GM12878 (cell line): ENCODE measurements at regions of chr11 and their contacts with region 1.

Region 1: DNA sequence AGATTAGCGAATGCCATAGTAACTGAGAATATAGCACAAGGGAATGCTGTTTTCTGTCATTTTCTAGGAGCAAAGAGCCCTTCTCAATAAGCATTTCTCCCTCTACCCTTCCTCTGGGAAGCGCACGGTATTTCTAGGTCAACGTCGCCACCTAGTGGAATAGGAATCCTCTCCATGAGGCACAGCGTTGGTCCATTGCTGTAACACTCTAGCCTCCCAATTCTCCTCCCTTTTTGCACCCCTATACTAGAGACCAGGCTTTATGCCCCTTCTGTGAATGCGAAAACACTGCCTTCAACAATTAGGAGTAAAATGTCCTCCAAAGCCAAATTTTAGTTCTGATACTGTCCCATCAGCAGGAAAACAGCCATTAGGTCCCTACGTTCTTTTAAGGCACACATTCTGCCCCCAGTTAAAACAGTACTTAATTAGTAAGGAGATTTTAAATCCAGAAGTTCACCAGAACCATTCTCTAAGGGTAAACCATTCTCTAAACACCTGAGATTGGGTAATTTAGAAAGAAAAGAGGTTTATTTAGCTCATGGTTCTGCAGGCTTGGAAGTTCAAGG is 12.8 kb upstream of the HYLS1 start:
- DNase-seq: no peak
- ATAC-seq: peak; percentile 97
- H3K4me3 ChIP-seq: no peak overlapping the region
- H3K27ac ChIP-seq: no peak overlapping the region
- H3K4me1 ChIP-seq: no peaks in the 10 kb centered on the region
- H3K27me3 ChIP-seq: no peaks in the 10 kb centered on the region
- CTCF ChIP-seq: peak; percentile 74 to 81 (median 77)
- EP300 ChIP-seq: no peak
- POLR2A ChIP-seq: no peak
- RAD21 ChIP-seq: peak; percentile 88

Region 2: DNA sequence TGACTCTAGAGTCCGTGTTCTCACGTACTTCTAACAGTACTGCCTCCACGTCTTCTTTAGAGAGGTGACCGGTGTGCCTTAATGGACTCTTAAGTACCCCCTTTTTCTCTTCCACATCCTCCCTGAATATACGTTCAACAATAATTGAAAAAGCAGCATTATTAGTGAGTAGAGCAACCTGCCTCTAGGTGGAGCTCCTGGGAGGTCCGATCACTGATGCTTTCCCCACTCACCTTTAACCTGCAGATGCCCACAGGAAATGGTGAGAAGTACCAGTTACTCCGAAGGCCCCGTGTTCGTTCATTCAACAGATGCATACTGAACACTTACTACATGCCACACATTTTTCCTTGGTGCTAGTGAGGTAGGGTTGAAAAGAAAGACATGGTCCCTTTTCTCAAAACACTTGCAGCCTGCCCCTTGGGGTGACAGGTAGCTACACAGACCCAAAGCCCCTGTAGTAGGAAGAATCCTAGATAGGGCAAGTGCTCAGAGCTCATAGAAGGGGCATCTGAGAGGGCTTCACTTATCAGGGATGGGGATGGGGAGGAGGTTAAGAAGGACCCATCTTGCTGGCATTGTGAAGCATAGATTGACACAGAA is 451.3 kb before region 1 on chr11:
- CTCF ChIA-PET with region 1: interaction called, 4 read pairs
- POLR2A ChIA-PET with region 1: no interaction called
- RAD21 ChIA-PET with region 1: no interaction called
- SMC1A ChIA-PET with region 1: no interaction called
- in situ Hi-C with region 1: loop called (anchors 10 kb)
- intact Hi-C with region 1: loop called (anchors 1 kb)
- DNase-seq: no peak
- ATAC-seq: peak; percentile 87
- H3K4me3 ChIP-seq: no peak overlapping the region
- H3K27ac ChIP-seq: no peak overlapping the region
- H3K4me1 ChIP-seq: no peaks in the 10 kb centered on the region
- H3K27me3 ChIP-seq: peaks cover 0 to 3% of the 10 kb centered on the region in 2 experiments; a peak in 2 of 4 replicates
- CTCF ChIP-seq: peak; percentile 52 to 69 (median 54); a peak in 5 of 6 replicates
- EP300 ChIP-seq: no peak
- POLR2A ChIP-seq: no peak
- RAD21 ChIP-seq: peak; percentile 33; the same call in 1 of the 2 replicates

Region 3: DNA sequence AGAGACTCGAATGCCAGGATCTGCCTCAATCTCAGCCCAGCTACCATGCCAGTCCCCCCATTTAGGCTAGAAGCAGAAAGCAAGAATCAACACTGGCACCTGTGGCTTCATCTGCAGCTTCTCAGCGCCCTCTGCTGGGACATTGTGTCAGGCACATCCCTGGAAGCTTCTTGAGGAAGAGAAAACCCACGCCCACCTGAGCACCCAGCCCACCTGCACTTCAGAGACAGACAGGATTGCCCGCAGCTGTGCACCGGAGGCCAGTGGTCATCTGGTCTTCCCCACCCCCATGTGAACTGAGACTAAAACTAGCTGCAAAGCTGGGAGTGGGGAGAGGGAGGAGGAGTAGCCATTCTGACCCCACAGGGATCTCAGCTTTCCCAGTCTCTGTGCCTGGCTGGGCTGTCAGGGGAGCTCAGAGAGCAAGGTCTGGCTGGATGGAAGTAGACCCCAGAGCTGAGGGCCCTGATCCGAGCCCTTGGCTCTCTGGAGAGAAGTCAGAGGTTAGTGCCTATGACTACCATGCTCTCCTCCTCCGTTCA is 445.4 kb before region 1 on chr11:
- CTCF ChIA-PET with region 1: interaction called, 4 read pairs
- POLR2A ChIA-PET with region 1: no interaction called
- RAD21 ChIA-PET with region 1: no interaction called
- SMC1A ChIA-PET with region 1: no interaction called
- in situ Hi-C with region 1: loop called (anchors 10 kb)
- intact Hi-C with region 1: no loop called
- DNase-seq: no peak
- ATAC-seq: peak; percentile 83
- H3K4me3 ChIP-seq: no peak overlapping the region
- H3K27ac ChIP-seq: no peak overlapping the region
- H3K4me1 ChIP-seq: no peaks in the 10 kb centered on the region
- H3K27me3 ChIP-seq: peaks cover 0 to 3% of the 10 kb centered on the region in 2 experiments; a peak in 2 of 4 replicates
- CTCF ChIP-seq: peak; percentile 76 to 87 (median 83)
- EP300 ChIP-seq: no peak
- POLR2A ChIP-seq: no peak
- RAD21 ChIP-seq: peak; percentile 57

Region 4: GRCh38 chr11:125625630-125626287 is 248.9 kb before region 1 on chr11:
- CTCF ChIA-PET with region 1: interaction called, 4 read pairs
- POLR2A ChIA-PET with region 1: no interaction called
- RAD21 ChIA-PET with region 1: no interaction called
- SMC1A ChIA-PET with region 1: no interaction called
- in situ Hi-C with region 1: no loop called
- intact Hi-C with region 1: loop called (anchors 2 kb)
- DNase-seq: peak; percentile 77
- ATAC-seq: peak; percentile 92
- H3K4me3 ChIP-seq: peak overlapping the region; percentile 81
- H3K27ac ChIP-seq: peak overlapping the region; percentile 97
- H3K4me1 ChIP-seq: peaks cover 7% of the 10 kb centered on the region; the same call in 1 of the 2 replicates
- H3K27me3 ChIP-seq: no peaks in the 10 kb centered on the region
- CTCF ChIP-seq: no peak
- EP300 ChIP-seq: no peak
- POLR2A ChIP-seq: peak; percentile 99
- RAD21 ChIP-seq: no peak

Region 5: GRCh38 chr11:125724125-125724524 is 150.5 kb before region 1 on chr11:
- CTCF ChIA-PET with region 1: interaction called, 4 read pairs
- POLR2A ChIA-PET with region 1: no interaction called
- RAD21 ChIA-PET with region 1: interaction called, 5 read pairs
- SMC1A ChIA-PET with region 1: no interaction called
- in situ Hi-C with region 1: no loop called
- intact Hi-C with region 1: loop called (anchors 2 kb)
- DNase-seq: no peak
- ATAC-seq: peak; percentile 63
- H3K4me3 ChIP-seq: no peak overlapping the region
- H3K27ac ChIP-seq: no peak overlapping the region
- H3K4me1 ChIP-seq: no peaks in the 10 kb centered on the region
- H3K27me3 ChIP-seq: peaks cover 0 to 2% of the 10 kb centered on the region in 2 experiments; a peak in 2 of 4 replicates
- CTCF ChIP-seq: peak; percentile 7 to 36 (median 31); a peak in 3 of 6 replicates
- EP300 ChIP-seq: no peak
- POLR2A ChIP-seq: no peak
- RAD21 ChIP-seq: no peak

Region 6: GRCh38 chr11:125833016-125833415 is 41.6 kb before region 1 on chr11 and contains the start of gene PATE4:
- CTCF ChIA-PET with region 1: no interaction called
- POLR2A ChIA-PET with region 1: no interaction called
- RAD21 ChIA-PET with region 1: no interaction called
- SMC1A ChIA-PET with region 1: no interaction called
- in situ Hi-C with region 1: no loop called
- intact Hi-C with region 1: no loop called
- DNase-seq: no peak
- ATAC-seq: no peak
- H3K4me3 ChIP-seq: no peak within 1 kb of the TSS
- H3K27ac ChIP-seq: no peak within 1 kb of the TSS
- H3K4me1 ChIP-seq: no peaks in the 10 kb centered on the region
- H3K27me3 ChIP-seq: no peaks in the 10 kb centered on the region; a peak in 3 of 4 replicates
- CTCF ChIP-seq: no peak
- EP300 ChIP-seq: no peak
- POLR2A ChIP-seq: no peak
- RAD21 ChIP-seq: no peak
- polyA plus RNA-seq, gene PATE4: not detected

Region 7: GRCh38 chr11:125923012-125923579 is 48.5 kb after region 1 on chr11:
- CTCF ChIA-PET with region 1: no interaction called
- POLR2A ChIA-PET with region 1: no interaction called
- RAD21 ChIA-PET with region 1: no interaction called
- SMC1A ChIA-PET with region 1: no interaction called
- in situ Hi-C with region 1: no loop called
- intact Hi-C with region 1: no loop called
- DNase-seq: peak; percentile 37
- ATAC-seq: peak; percentile 97
- H3K4me3 ChIP-seq: no peak overlapping the region
- H3K27ac ChIP-seq: no peak overlapping the region
- H3K4me1 ChIP-seq: no peaks in the 10 kb centered on the region
- H3K27me3 ChIP-seq: no peaks in the 10 kb centered on the region
- CTCF ChIP-seq: peak; percentile 83 to 89 (median 85)
- EP300 ChIP-seq: no peak
- POLR2A ChIP-seq: no peak
- RAD21 ChIP-seq: peak; percentile 89

Region 8: DNA sequence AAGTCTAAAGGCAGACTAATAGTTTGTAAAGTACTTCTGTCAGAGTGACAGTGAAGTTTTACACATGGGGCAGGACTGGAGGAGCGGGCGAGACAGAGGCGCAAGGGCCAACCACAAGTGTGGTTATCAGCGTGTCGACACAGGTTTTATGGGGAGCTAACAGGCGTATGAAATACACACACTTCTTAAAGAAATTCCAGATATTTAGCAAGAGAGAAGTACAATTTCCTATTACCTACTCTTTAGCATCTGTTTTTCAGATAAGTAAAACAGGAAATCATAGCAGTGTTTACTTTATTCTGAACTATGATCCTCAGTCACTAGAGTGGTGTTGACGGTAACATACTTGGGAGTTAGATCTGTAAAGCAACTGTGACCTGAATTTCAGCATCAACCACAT is 93.7 kb after region 1 on chr11:
- CTCF ChIA-PET with region 1: no interaction called
- POLR2A ChIA-PET with region 1: no interaction called
- RAD21 ChIA-PET with region 1: no interaction called
- SMC1A ChIA-PET with region 1: no interaction called
- in situ Hi-C with region 1: no loop called
- intact Hi-C with region 1: no loop called
- DNase-seq: no peak
- ATAC-seq: peak; percentile 60
- H3K4me3 ChIP-seq: no peak overlapping the region
- H3K27ac ChIP-seq: no peak overlapping the region
- H3K4me1 ChIP-seq: no peaks in the 10 kb centered on the region
- H3K27me3 ChIP-seq: no peaks in the 10 kb centered on the region
- CTCF ChIP-seq: no peak
- EP300 ChIP-seq: no peak
- POLR2A ChIP-seq: no peak
- RAD21 ChIP-seq: no peak

Region 9: DNA sequence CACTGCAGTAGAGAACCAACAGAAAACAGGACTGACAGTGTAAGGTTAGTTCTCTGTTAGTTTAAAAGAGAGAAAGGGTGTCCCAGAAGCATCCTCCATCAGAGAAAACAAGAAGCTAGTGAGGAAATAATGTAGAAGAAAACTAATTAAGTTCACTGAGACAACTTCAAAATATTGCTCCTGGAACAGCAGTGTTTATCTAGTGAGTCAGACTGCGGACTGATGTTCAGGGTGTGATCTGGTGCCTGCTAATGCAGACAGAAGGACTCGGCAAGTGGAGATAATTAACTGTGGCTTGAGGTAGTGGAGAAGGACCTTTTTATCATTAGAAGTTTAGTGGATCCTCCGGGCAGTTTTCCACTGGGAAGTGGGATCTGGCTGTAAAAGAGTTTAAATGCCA is 132.6 kb after region 1 on chr11:
- CTCF ChIA-PET with region 1: no interaction called
- POLR2A ChIA-PET with region 1: no interaction called
- RAD21 ChIA-PET with region 1: no interaction called
- SMC1A ChIA-PET with region 1: no interaction called
- in situ Hi-C with region 1: no loop called
- intact Hi-C with region 1: no loop called
- DNase-seq: no peak
- ATAC-seq: no peak
- H3K4me3 ChIP-seq: no peak overlapping the region
- H3K27ac ChIP-seq: no peak overlapping the region
- H3K4me1 ChIP-seq: no peaks in the 10 kb centered on the region
- H3K27me3 ChIP-seq: 0 out of 4 replicates have a peak, but pooled peaks cover 0 to 4% of the 10 kb centered on the region in 2 experiments
- CTCF ChIP-seq: no peak
- EP300 ChIP-seq: no peak
- POLR2A ChIP-seq: no peak
- RAD21 ChIP-seq: no peak